ENCODE measurements at regions of chr18 and their contacts with region 1.

Region 1: DNA sequence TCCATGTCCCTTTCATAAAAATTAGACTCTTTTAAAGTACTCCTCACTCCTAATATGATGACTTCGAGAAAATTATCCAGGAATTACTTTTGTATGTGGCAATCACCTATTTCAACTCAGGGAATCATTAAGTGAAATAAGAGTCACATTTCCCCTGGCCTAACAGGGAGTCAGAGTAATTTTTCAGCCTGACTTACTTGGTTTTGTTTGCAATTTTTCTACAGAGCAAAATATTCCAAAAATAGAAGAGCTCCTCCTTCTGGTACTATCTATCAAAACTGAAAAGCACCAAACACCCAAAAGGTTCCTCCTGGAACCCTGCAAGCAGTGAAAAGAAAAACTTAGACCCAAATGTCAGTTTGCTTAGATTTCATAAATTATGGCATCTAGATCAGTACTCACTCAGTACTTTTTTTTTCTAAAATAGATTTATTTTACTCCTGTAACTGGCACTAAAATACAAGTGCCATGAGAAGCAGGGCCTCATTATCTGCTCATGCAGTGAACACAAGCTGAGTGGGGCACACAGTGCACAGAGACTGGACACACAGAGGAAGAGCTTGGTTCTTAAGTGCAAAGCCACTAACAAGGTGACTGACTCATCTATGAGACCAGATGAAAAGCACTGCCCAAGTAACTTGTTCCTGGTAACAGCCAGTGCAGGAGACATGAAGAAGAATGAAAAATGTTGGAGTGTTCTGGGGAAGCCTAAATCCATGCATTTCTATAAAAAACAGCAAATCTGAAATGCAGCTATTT is 28.7 kb downstream of the ACAA2 start:
- DNase-seq: no peak
- H3K4me3 ChIP-seq: no peak overlapping the region
- H3K27ac ChIP-seq: no peak overlapping the region
- H3K27me3 ChIP-seq: no peaks in the 10 kb centered on the region
- CTCF ChIP-seq: peak; percentile 42

Region 2: GRCh38 chr18:49416511-49416910 is 368.1 kb before region 1 on chr18:
- CTCF ChIA-PET with region 1: no interaction called
- POLR2A ChIA-PET with region 1: no interaction called
- DNase-seq: no peak
- H3K4me3 ChIP-seq: no peak overlapping the region
- H3K27ac ChIP-seq: no peak overlapping the region
- H3K27me3 ChIP-seq: no peaks in the 10 kb centered on the region
- CTCF ChIP-seq: no peak

Region 3: GRCh38 chr18:49858309-49859020 is 73.9 kb after region 1 on chr18:
- CTCF ChIA-PET with region 1: interaction called, 17 read pairs
- POLR2A ChIA-PET with region 1: no interaction called
- DNase-seq: peak; percentile 38
- H3K4me3 ChIP-seq: no peak overlapping the region
- H3K27ac ChIP-seq: no peak overlapping the region
- H3K27me3 ChIP-seq: peaks cover 16% of the 10 kb centered on the region
- CTCF ChIP-seq: peak; percentile 98

Measured in AG04450 (cell line).